RWPE1 (cell line): ENCODE measurements at regions of chr2 and their contacts with region 1.

Region 1: DNA sequence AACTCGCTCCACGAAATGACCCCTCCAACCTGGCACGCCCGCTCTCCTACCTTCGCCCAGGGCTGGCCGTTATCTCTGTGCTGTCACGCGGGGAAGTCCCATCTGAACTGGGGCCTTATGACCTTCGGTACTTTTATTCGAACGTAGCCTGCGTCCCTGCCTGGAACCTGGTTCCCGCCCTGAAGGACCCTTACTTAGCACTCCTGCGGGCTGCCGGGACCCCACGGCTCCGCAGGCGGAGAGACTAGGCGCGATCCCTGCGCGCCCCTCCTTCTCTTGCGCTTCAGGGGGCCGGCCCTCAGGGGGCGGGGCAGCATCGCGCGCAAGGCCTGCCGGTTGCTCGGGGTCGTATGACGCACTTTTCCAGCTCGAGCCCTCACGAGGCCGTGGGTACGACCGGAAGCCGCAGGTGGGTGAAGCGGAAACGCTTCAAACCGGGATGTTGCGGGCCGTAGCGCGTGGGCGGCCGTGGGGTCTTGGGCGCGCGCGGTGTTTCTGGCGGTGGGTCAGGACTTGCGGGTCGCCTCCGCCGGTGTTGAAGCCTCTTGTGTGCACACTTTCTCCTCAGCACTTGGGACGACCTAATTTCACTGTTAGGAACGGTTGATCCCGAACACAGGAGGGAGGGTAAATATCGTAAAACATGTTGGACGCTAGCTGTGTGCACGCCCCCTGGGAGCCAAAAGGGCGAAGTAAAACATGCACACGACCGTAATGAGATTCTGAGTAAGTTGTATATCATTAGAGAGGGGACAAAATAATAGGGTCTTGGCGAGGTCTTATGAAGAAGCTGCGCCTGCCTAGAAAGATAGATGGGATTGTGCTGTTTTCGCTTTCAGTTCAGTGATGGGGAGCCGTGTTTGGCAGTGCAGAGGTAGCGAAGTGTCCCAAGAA is at the starts of genes LIPT1 and TSGA10:
- DNase-seq: peak; percentile 94
- H3K27ac ChIP-seq: peak within 1 kb of the TSS; percentile 83
- CTCF ChIP-seq: no peak

Region 2: GRCh38 chr2:99106913-99107312 is 48.0 kb before region 1 on chr2:
- CTCF ChIA-PET with region 1: no interaction called
- POLR2A ChIA-PET with region 1: no interaction called
- DNase-seq: no peak
- H3K27ac ChIP-seq: no peak overlapping the region
- CTCF ChIP-seq: no peak

Region 3: GRCh38 chr2:99141110-99142108 is 13.5 kb before region 1 on chr2 and contains the start of gene C2orf15:
- CTCF ChIA-PET with region 1: no interaction called
- POLR2A ChIA-PET with region 1: interaction called, 10 read pairs
- DNase-seq: peak; percentile 88
- H3K27ac ChIP-seq: peak within 1 kb of the TSS; percentile 87
- CTCF ChIP-seq: no peak

Region 4: GRCh38 chr2:99169534-99169933 is 14.6 kb after region 1 on chr2:
- CTCF ChIA-PET with region 1: interaction called, 11 read pairs
- POLR2A ChIA-PET with region 1: no interaction called
- DNase-seq: no peak
- H3K27ac ChIP-seq: no peak overlapping the region
- CTCF ChIP-seq: no peak